ENCODE measurements at regions of chr14 and their contacts with region 1.

Region 1: DNA sequence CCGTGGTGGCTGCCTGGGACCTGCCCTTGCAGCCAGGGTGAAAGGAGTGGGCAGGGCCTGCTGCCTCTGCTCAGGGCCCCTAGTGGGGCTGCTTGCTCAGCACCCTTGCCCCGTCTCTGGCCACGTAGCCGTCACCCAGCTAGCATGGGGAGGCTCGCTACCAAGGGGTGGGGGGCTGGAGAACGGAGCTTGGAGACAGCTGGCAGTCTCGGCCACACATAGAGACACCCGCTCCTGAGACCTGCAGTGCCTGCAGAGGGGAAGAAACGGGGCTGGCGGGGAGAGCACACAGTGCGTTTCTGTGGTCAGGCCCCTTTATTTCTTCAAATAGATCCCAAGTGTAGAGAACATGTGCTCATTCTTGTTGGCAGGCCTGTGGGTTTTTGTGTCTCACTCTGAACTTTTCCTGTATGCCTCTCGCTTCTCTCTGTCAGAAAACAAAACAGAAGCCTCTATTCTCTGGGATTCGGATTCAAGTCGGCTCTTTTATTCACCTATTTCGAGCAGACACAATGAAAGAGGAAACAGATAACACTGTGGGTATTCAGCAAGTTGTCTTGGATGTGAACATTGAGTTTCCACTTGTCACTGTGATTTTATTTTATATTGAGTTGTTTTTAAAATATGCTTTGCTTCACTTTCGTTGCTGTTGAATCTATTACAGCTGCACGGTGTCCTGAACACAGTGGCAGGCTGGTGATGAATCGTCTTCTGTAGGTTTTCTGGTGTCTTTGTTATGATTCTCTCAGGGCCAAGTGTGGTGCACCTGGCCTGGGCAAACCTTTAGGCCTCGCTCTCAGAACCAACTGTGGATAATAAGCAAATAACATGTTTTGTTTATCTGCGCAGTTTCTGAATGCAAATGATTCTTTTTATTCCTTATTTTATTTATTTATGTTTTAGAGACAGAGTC is 26.5 kb downstream of the PACS2 start:
- DNase-seq: no peak
- ATAC-seq: no peak
- H3K4me3 ChIP-seq: no peak overlapping the region
- H3K27ac ChIP-seq: no peak overlapping the region
- H3K4me1 ChIP-seq: peaks cover 6 to 24% of the 10 kb centered on the region in 2 experiments; a peak in 3 of 5 replicates
- H3K27me3 ChIP-seq: no peaks in the 10 kb centered on the region
- CTCF ChIP-seq: no peak
- EP300 ChIP-seq: no peak
- POLR2A ChIP-seq: no peak
- RAD21 ChIP-seq: no peak

Region 2: DNA sequence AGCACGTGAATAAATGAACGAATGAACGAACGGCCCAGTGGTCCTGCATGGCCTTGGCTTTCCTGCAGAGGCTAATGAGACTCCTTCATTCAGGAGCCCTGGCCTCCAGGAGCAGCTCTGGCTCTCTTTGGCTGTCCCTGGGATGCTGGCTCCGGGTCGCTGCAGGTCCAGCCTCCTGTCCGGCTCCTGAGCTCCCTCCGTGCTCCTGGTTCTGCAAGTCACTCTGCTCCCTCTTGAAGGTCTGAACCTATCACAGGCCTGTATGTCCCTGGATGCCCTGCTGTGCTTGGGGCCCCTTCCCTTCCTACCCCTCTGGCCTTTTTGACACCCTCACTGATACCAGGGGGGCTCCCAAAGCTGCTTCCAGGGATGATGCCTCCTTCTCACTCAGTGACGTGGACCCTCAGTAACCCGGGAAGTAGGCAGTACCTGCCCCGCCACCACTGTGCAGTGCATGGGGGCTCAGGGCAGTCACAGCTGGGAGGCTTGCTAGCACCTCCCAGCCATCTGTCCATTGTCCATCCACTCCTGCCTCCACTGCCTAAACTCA is 895.2 kb before region 1 on chr14:
- CTCF ChIA-PET with region 1: no interaction called
- POLR2A ChIA-PET with region 1: no interaction called
- in situ Hi-C with region 1: no loop called
- intact Hi-C with region 1: no loop called
- DNase-seq: no peak
- ATAC-seq: no peak
- H3K4me3 ChIP-seq: no peak overlapping the region
- H3K27ac ChIP-seq: no peak overlapping the region
- H3K4me1 ChIP-seq: no peaks in the 10 kb centered on the region
- H3K27me3 ChIP-seq: peaks cover 0 to 6% of the 10 kb centered on the region in 2 experiments; a peak in 2 of 5 replicates
- CTCF ChIP-seq: no peak
- EP300 ChIP-seq: no peak
- POLR2A ChIP-seq: no peak
- RAD21 ChIP-seq: no peak

Region 3: DNA sequence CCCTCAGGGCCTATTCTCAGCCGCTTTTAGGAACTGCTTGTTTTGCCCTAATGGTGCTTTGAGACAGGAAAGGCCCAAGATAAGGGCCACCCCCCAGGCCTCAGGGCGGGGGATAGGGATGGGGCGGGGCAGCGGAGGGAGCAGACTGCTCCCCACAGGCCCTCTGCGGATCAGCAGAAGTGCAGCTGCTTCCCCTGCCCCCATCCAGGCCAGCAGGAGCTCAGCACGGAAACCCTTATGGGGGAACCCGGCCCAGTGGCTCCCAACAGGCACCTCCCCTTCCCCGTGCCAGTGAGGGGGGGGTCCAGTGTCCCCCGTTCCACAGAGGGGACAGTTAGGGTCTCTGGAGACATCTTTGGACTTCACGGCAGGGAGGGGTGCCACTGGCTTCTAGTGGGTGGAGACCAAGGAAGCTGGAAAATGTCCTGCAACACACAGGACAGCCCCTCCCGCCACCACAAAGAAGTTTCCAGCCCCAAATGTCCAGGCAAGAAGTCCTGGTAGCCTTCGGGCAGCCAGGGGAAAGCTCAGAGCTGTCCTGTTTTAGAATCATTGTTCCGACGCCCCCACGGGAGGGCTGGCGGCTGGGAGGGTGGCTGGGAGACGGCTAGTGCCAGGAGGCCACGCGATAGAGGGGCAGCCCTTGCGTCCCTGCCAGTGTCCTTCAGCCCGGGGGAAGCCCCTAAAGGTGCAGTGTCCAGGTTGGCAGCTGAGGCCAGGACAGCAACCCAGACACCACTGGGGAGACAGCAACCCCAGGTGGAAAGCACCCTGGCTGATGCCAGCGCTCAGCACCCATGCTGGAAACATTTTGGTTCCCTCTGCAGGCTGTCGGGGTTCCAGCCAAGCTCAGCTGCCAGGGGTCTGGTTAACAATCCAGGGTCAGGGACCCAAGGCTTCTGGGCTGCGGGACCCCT is 265.4 kb before region 1 on chr14:
- CTCF ChIA-PET with region 1: no interaction called
- POLR2A ChIA-PET with region 1: no interaction called
- in situ Hi-C with region 1: no loop called
- intact Hi-C with region 1: no loop called
- DNase-seq: peak; percentile 87 to 93 (median 88)
- ATAC-seq: peak; percentile 99
- H3K4me3 ChIP-seq: no peak overlapping the region
- H3K27ac ChIP-seq: peak overlapping the region; percentile 66
- H3K4me1 ChIP-seq: peaks cover 7 to 44% of the 10 kb centered on the region in 2 experiments; a peak in 4 of 5 replicates
- H3K27me3 ChIP-seq: peaks cover 0 to 7% of the 10 kb centered on the region in 2 experiments; a peak in 1 of 5 replicates
- CTCF ChIP-seq: no peak
- EP300 ChIP-seq: no peak
- POLR2A ChIP-seq: no peak
- RAD21 ChIP-seq: no peak

Region 4: GRCh38 chr14:105212541-105213300 is 128.4 kb before region 1 on chr14:
- CTCF ChIA-PET with region 1: no interaction called
- POLR2A ChIA-PET with region 1: no interaction called
- in situ Hi-C with region 1: loop called (anchors 5 kb)
- intact Hi-C with region 1: no loop called
- DNase-seq: no peak
- ATAC-seq: no peak
- H3K4me3 ChIP-seq: no peak overlapping the region
- H3K27ac ChIP-seq: no peak overlapping the region
- H3K4me1 ChIP-seq: peaks cover 0 to 17% of the 10 kb centered on the region in 2 experiments; a peak in 2 of 5 replicates
- H3K27me3 ChIP-seq: no peaks in the 10 kb centered on the region
- CTCF ChIP-seq: no peak
- EP300 ChIP-seq: no peak
- POLR2A ChIP-seq: no peak
- RAD21 ChIP-seq: no peak

Region 5: GRCh38 chr14:105267820-105268548 is 73.1 kb before region 1 on chr14:
- CTCF ChIA-PET with region 1: no interaction called
- POLR2A ChIA-PET with region 1: no interaction called
- in situ Hi-C with region 1: loop called (anchors 10 kb)
- intact Hi-C with region 1: no loop called
- DNase-seq: no peak
- ATAC-seq: no peak
- H3K4me3 ChIP-seq: no peak overlapping the region
- H3K27ac ChIP-seq: no peak overlapping the region
- H3K4me1 ChIP-seq: peaks cover 0 to 5% of the 10 kb centered on the region in 2 experiments; a peak in 2 of 5 replicates
- H3K27me3 ChIP-seq: no peaks in the 10 kb centered on the region
- CTCF ChIP-seq: no peak
- EP300 ChIP-seq: no peak
- POLR2A ChIP-seq: no peak
- RAD21 ChIP-seq: no peak

Measured in K562 (cell line).